ENCODE measurements at regions of chr1 and their contacts with region 1.

Region 1: GRCh38 chr1:2381741-2382620 is 9.4 kb downstream of the MORN1 start:
- DNase-seq: peak; percentile 93

Region 2: GRCh38 chr1:2127187-2128145 is 254.5 kb before region 1 on chr1:
- intact Hi-C with region 1: loop called (anchors 5 kb)
- DNase-seq: peak; percentile 72

Region 3: GRCh38 chr1:2194898-2195673 is 186.9 kb before region 1 on chr1:
- intact Hi-C with region 1: loop called (anchors 1 kb)
- DNase-seq: peak; percentile 95

Measured in cardiac septum (tissue), 1 donor.